ENCODE measurements at regions of chr19 and their contacts with region 1.

Region 1: DNA sequence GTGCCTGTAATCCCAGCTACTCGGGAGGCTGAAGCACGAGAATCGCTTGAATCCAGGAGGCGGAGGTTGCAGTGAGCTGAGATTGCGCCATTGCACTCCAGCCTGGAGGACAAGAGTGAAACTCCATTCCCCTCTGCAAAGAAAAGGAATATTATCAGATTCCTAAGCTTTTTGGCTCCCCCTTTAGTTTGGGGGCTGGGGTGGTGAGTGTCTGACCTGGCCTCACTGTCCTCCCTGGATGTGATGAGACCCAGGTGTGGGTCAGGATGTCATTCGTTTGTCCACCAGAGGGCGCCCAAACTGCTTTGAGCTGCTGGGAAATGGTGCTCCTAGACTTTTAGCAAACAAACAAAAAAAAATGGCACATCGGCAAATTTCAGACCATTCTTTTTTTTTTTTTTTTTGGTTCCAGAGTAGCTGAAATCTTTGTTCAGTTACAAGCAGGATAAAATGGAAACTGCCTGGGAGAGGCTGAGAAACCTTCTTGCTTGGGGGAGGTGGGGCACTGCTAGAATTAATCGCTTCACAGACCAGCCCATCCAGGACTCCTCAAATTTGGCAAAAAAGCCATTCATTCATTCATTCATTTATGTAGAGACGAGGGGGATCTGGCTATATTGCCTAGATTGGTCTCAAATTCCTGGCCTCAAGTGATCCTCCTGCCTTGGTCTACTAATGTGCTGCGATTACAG is 29.4 kb downstream of the SPC24 start:
- DNase-seq: peak; percentile 78
- H3K4me3 Mint-ChIP-seq: no peak overlapping the region
- H3K27ac Mint-ChIP-seq: no peak overlapping the region
- H3K4me1 Mint-ChIP-seq: peaks cover 6% of the 10 kb centered on the region
- H3K27me3 Mint-ChIP-seq: no peaks in the 10 kb centered on the region

Region 2: DNA sequence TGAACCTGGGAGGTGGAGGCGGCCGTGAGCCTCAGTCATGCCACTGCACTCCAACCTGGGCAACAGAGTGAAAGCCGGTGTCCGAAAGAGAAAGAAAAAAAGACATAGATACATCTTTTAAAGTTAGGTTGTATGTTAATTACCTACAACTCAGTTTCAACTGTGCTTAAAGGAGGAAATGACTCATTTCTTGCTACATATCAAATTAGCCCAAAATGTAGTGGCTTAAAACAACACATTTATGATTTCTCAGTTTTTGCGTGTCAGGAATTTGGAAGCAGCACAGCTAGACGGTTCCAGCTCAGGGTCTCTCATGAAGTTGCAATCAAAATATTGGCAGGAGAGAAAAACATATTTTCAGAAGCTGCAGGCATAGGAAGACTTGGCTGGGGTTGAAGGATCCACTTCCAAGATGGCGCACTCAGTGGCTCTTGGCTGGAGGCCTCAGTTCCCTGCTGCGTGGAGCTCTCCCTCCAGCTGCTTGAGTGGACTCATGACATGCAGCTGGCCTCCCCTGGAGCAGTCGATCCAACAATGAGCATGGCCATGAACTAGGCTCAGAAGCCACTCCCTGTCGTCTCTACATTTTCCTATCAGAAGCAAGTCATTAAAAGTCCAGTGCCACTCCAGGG is 29.8 kb before region 1 on chr19:
- CTCF ChIA-PET with region 1: interaction called, 14 read pairs
- POLR2A ChIA-PET with region 1: interaction called, 5 read pairs
- DNase-seq: peak; percentile 55
- H3K4me3 Mint-ChIP-seq: peak overlapping the region; percentile 72
- H3K27ac Mint-ChIP-seq: peak overlapping the region; percentile 92
- H3K4me1 Mint-ChIP-seq: peaks cover 68% of the 10 kb centered on the region
- H3K27me3 Mint-ChIP-seq: no peaks in the 10 kb centered on the region

Region 3: GRCh38 chr19:11155373-11156120 is 29.4 kb after region 1 on chr19 and contains the start of gene SPC24:
- CTCF ChIA-PET with region 1: interaction called, 11 read pairs
- POLR2A ChIA-PET with region 1: interaction called, 10 read pairs
- DNase-seq: peak; percentile 96
- H3K4me3 Mint-ChIP-seq: peak within 1 kb of the TSS; percentile 80
- H3K27ac Mint-ChIP-seq: peak within 1 kb of the TSS; percentile 92
- H3K4me1 Mint-ChIP-seq: peaks cover 31% of the 10 kb centered on the region
- H3K27me3 Mint-ChIP-seq: peaks cover 3% of the 10 kb centered on the region
- total RNA-seq, gene SPC24: 68.2 to 72.1 TPM

Measured in activated CD4-positive, alpha-beta memory T cell treated with anti-CD3 and anti-CD28 coated beads, Interleukin-2, amount 10 ng/mL, durations not matched to agents 7 days and 5 days (primary cell).